Esophagus muscularis mucosa (tissue), 4 donors: ENCODE measurements at regions of chr4 and their contacts with region 1.

Region 1: GRCh38 chr4:7254736-7255487 is 62.6 kb downstream of the SORCS2 start:
- DNase-seq: no peak
- H3K4me3 ChIP-seq: no peak overlapping the region
- H3K27ac ChIP-seq: no peak overlapping the region
- H3K4me1 ChIP-seq: peaks cover 19 to 65% (median 52%) of the 10 kb centered on the region in 4 donors
- H3K27me3 ChIP-seq: no peaks in the 10 kb centered on the region
- CTCF ChIP-seq: no peak
- EP300 ChIP-seq: no peak
- POLR2A ChIP-seq: no peak

Region 2: GRCh38 chr4:7201420-7202305 is 53.2 kb before region 1 on chr4:
- intact Hi-C with region 1: loop called (anchors 5 kb)
- DNase-seq: no peak
- H3K4me3 ChIP-seq: peak overlapping the region in 2 of 4 donors; percentile 13 to 20
- H3K27ac ChIP-seq: peak overlapping the region; percentile 39 to 68 (median 50)
- H3K4me1 ChIP-seq: peaks cover 14 to 56% (median 46%) of the 10 kb centered on the region in 4 donors
- H3K27me3 ChIP-seq: no peaks in the 10 kb centered on the region
- CTCF ChIP-seq: no peak
- EP300 ChIP-seq: no peak
- POLR2A ChIP-seq: no peak

Region 3: DNA sequence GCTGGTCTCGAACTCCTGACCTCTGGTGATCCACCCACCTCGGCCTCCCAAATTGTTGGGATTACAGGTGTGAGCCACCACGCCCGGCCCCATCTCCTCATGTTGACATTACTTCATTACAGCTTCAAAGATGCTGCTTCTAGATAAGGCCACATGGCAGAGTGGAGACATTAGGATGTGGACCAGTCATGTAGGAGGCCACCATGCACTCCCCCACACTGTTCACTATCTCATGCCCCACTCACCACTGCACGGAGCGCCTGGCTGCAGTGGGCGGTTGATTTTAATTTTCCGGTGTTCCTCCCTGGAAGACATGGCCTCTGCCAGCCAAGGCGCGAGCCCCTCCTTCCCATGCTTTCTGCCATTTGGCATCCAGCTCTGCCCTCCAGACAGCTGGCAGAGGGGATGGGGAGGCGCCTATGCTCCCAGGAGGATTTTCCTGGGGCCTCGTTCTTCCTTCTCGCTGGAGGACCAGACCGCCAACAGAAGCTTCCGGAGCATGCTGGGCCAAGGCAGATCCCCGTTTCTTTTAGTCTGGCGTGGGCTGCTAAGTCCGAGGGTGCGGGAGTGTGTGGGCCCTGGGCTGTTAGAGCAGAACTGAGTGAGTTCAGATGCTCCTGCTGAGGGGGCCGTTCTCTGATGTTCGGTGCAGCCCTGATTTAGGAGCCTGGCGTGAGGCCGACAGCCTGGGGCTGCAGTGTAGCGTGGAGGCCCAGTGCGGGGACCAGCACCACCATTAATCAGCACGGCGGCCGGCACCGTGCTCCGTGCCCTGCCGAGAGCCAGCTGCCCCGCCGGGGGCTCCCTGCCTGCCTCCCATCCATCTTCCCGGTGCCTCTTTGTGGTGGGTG is 30.6 kb after region 1 on chr4:
- intact Hi-C with region 1: loop called (anchors 1 kb)
- DNase-seq: no peak
- H3K4me3 ChIP-seq: no peak overlapping the region
- H3K27ac ChIP-seq: peak overlapping the region in 2 of 4 donors; percentile 48 to 55
- H3K4me1 ChIP-seq: peaks cover 0 to 15% (median 13%) of the 10 kb centered on the region in 4 donors
- H3K27me3 ChIP-seq: no peaks in the 10 kb centered on the region
- CTCF ChIP-seq: no peak
- EP300 ChIP-seq: no peak
- POLR2A ChIP-seq: no peak

Region 4: DNA sequence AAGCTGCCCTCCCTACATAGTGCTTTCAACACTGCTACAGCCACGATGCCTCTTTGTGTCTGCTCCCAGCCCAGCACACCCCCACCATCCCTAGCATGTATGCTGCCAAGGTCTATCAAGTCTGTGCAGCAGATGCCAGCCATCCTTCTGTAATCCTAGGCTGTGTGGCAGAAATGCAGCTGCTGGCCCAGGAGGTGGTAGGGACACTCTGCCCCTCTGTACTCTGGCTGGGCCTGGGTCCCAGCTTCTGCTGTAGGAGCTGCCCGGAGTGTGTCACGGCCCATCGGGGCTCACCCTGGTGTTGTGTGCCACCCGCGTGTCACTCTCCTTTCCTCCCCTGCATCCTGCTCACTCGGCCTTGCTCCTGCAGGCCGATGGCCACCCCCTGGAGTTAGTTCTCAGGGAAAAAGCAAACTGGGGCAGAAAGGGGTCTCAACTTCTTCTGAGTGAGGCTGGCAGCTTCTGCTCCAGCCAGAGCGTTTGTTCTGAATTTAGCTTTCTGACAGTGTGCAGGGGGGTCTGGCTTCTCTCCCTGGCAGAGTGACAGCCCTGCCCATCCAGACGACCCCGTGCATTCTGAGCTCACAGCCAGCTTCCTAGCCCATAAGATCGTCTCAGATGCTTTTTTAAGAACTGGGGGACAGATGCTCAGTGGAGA is 157.1 kb after region 1 on chr4:
- intact Hi-C with region 1: no loop called
- DNase-seq: no peak
- H3K4me3 ChIP-seq: no peak overlapping the region
- H3K27ac ChIP-seq: peak overlapping the region; percentile 77 to 82 (median 78)
- H3K4me1 ChIP-seq: peaks cover 3 to 49% (median 39%) of the 10 kb centered on the region in 4 donors
- H3K27me3 ChIP-seq: no peaks in the 10 kb centered on the region
- CTCF ChIP-seq: no peak
- EP300 ChIP-seq: no peak
- POLR2A ChIP-seq: no peak